ENCODE measurements at regions of chr7 and their contacts with region 1.

Region 1: GRCh38 chr7:22110227-22110839 is 164.6 kb upstream of the CDCA7L start:
- DNase-seq: peak; percentile 84
- ATAC-seq: peak; percentile 92
- H3K4me3 ChIP-seq: no peak overlapping the region
- H3K27ac ChIP-seq: no peak overlapping the region
- H3K4me1 ChIP-seq: no peaks in the 10 kb centered on the region
- H3K27me3 ChIP-seq: no peaks in the 10 kb centered on the region
- CTCF ChIP-seq: peak; percentile 88

Region 2: GRCh38 chr7:22255834-22256233 is 145.5 kb after region 1 on chr7:
- CTCF ChIA-PET with region 1: interaction called, 5 read pairs
- POLR2A ChIA-PET with region 1: no interaction called
- intact Hi-C with region 1: loop called (anchors 1 kb)
- DNase-seq: no peak
- ATAC-seq: peak; percentile 42
- H3K4me3 ChIP-seq: no peak overlapping the region
- H3K27ac ChIP-seq: no peak overlapping the region
- H3K4me1 ChIP-seq: no peaks in the 10 kb centered on the region
- H3K27me3 ChIP-seq: no peaks in the 10 kb centered on the region
- CTCF ChIP-seq: no peak

Region 3: DNA sequence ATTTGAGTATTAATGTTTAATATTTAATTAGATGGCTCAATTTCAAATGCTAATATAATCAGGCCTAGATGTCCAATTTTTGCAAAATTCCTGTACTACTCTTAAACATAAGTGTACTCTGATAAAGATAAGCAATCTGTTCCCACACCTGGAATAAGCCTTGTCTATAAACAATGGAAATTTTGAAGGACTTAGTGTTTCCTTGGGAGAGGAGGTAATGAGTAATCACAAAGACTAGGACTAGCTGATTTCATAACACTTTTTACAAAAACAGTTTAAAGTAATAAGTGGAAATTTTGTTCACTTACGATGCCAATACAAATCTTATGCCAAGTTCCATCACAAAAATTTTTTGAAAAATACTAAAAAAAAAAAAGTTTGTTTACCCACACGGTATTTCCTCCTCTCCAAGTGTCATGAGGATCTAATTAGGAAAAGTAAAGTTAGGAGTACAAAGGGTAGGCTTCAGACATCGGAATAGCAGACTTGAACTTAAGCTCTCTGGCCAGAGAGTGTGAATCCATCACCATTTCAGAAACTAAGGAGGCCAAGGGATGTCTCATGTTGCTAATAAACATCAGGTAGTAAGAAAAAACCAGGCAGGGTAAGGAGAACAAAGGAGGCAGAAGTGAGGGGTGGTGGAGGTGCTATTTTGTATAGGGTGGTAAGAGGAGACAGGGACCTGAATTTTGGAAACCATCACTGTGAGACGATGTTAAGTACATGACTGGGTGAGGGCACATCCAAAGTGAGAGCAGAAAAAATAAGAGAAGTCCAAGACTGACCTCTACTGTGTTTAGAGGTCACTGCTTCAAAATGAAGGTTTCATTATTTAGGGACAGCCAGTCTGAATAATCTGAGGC is 185.3 kb after region 1 on chr7:
- CTCF ChIA-PET with region 1: interaction called, 16 read pairs
- POLR2A ChIA-PET with region 1: no interaction called
- intact Hi-C with region 1: loop called (anchors 1 kb)
- DNase-seq: no peak
- ATAC-seq: no peak
- H3K4me3 ChIP-seq: no peak overlapping the region
- H3K27ac ChIP-seq: no peak overlapping the region
- H3K4me1 ChIP-seq: no peaks in the 10 kb centered on the region
- H3K27me3 ChIP-seq: no peaks in the 10 kb centered on the region
- CTCF ChIP-seq: no peak

Region 4: DNA sequence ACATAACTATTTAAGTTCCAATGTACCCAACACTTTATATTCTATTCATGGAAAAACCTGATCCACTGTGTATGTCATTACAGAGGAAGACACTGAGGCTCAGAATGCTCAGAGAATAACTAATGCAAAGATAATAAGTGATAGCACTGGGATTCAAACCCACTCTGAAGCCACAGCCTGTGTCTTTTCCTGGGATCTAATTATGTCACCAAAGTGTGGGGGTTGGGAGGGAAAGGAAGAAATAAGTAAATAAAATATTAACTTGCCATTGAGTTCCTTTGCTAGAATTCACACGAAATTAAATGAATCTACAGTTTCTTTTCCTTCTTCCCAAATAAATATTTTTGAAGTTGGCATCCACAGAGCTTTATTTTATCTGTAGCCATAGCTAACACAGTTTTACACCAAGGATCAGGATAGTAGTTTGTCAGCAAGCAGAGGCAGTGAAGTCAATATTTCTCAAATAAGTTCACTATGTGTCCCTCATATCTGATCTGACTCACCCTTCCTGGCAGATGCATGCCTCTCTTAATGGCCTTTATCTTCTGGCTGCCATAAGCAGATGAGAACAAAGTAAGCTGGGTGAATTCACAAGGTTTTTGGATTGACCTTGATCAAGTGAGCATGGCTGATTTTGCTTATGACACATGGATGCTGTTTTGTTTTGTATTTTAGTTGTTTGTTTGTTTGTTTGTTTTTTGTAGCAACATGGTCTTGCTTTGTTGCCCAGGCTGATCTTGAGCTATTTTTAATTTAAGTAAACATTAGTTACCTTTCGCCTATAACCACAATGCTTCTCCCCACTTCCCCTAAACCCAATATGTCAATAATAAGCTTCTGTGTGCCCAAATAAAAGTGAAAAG is 240.4 kb after region 1 on chr7:
- CTCF ChIA-PET with region 1: no interaction called
- POLR2A ChIA-PET with region 1: no interaction called
- intact Hi-C with region 1: loop called (anchors 5 kb)
- DNase-seq: peak; percentile 76
- ATAC-seq: peak; percentile 67
- H3K4me3 ChIP-seq: peak overlapping the region; percentile 17; the same call in 1 of the 2 replicates
- H3K27ac ChIP-seq: peak overlapping the region; percentile 50
- H3K4me1 ChIP-seq: peaks cover 48% of the 10 kb centered on the region
- H3K27me3 ChIP-seq: no peaks in the 10 kb centered on the region
- CTCF ChIP-seq: no peak

Region 5: DNA sequence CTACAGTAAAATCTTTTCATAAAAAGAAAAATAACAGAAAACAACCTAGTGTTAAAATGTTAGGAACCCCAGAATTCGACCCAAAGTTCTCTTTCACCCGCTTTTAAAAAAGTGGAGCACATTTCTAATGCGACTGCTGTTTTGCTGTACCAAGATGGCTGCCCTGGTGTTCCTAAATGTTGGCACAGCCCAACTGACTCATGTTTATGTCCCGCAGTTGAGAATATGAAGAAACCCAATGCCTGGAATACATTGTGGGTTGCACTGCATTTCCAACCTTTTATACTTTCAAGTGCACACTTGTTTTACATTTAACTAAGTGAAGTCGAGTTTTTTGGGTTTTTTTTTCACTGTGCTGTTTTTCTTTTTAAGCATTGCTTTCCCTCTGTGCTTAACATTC is 388.7 kb after region 1 on chr7:
- CTCF ChIA-PET with region 1: interaction called, 3 read pairs
- POLR2A ChIA-PET with region 1: no interaction called
- intact Hi-C with region 1: loop called (anchors 2 kb)
- DNase-seq: no peak
- ATAC-seq: no peak
- H3K4me3 ChIP-seq: no peak overlapping the region
- H3K27ac ChIP-seq: no peak overlapping the region
- H3K4me1 ChIP-seq: peaks cover 14% of the 10 kb centered on the region
- H3K27me3 ChIP-seq: no peaks in the 10 kb centered on the region
- CTCF ChIP-seq: no peak